H1 (cell line): ENCODE measurements at regions of chr5 and their contacts with region 1.

Region 1: DNA sequence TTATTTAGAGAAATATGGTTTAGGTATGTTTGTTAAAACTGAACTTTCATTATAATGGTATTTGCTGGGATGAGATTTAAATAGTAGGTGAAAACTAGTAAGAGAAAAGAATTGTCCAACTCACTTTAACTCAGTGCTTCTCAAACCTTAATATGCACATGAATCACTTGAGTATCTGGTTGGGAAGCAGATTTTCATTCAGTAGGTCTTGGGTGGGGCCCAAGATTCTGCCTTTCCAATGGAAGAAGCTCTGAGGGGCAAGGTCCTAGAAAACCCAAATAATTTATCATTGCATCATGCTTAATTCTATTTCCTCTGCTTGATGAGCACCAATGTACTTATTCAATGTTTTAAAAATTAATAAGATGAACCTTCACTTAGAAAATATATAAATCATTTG is 262.6 kb downstream of the KIAA0825 start:
- DNase-seq: no peak
- H3K4me3 ChIP-seq: peak overlapping the region in 1 of 4 experiments; percentile 44; a peak in 1 of 8 replicates
- H3K27ac ChIP-seq: no peak overlapping the region
- H3K4me1 ChIP-seq: peaks cover 2 to 39% (median 11%) of the 10 kb centered on the region in 4 experiments; a peak in 6 of 7 replicates
- H3K27me3 ChIP-seq: no peaks in the 10 kb centered on the region
- CTCF ChIP-seq: no peak
- EP300 ChIP-seq: no peak
- POLR2A ChIP-seq: no peak
- RAD21 ChIP-seq: no peak

Region 2: GRCh38 chr5:94345257-94345656 is 10.6 kb before region 1 on chr5:
- CTCF ChIA-PET with region 1: interaction called, 3 read pairs
- POLR2A ChIA-PET with region 1: interaction called, 93 read pairs
- DNase-seq: no peak
- H3K4me3 ChIP-seq: no peak overlapping the region
- H3K27ac ChIP-seq: no peak overlapping the region
- H3K4me1 ChIP-seq: no peaks in the 10 kb centered on the region
- H3K27me3 ChIP-seq: no peaks in the 10 kb centered on the region
- CTCF ChIP-seq: no peak
- EP300 ChIP-seq: no peak
- POLR2A ChIP-seq: peak in 1 of 2 experiments; percentile 46; a peak in 1 of 3 replicates
- RAD21 ChIP-seq: no peak

Region 3: DNA sequence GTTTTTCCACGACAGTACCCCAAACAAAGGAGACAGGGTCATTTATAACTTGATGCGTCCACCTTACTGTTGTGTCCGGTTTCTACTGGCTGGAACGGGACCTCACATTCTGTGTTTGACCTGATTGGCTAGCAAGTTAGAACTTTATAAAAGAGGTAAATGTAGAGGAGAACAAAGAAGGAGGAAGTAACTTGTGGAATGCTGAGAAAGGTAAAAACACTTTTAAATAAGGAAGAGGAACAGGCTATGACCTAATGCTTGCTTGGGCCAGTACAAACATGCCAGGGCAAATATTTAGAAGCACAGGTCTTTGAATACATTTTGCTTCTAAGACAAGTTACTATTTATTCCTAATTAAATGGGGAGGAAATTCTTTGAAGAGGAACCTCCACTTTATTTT is 11.0 kb after region 1 on chr5:
- CTCF ChIA-PET with region 1: interaction called, 4 read pairs
- POLR2A ChIA-PET with region 1: interaction called, 44 read pairs
- DNase-seq: no peak
- H3K4me3 ChIP-seq: no peak overlapping the region
- H3K27ac ChIP-seq: no peak overlapping the region
- H3K4me1 ChIP-seq: peaks cover 0 to 3% (median 1%) of the 10 kb centered on the region in 4 experiments; a peak in 2 of 7 replicates
- H3K27me3 ChIP-seq: no peaks in the 10 kb centered on the region
- CTCF ChIP-seq: no peak
- EP300 ChIP-seq: no peak
- POLR2A ChIP-seq: no peak
- RAD21 ChIP-seq: no peak

Region 4: GRCh38 chr5:94376672-94377345 is 21.0 kb after region 1 on chr5:
- CTCF ChIA-PET with region 1: no interaction called
- POLR2A ChIA-PET with region 1: interaction called, 12 read pairs
- DNase-seq: no peak
- H3K4me3 ChIP-seq: no peak overlapping the region
- H3K27ac ChIP-seq: no peak overlapping the region
- H3K4me1 ChIP-seq: peaks cover 0 to 4% (median 3%) of the 10 kb centered on the region in 4 experiments; a peak in 3 of 7 replicates
- H3K27me3 ChIP-seq: no peaks in the 10 kb centered on the region
- CTCF ChIP-seq: no peak
- EP300 ChIP-seq: no peak
- POLR2A ChIP-seq: no peak
- RAD21 ChIP-seq: no peak

Region 5: DNA sequence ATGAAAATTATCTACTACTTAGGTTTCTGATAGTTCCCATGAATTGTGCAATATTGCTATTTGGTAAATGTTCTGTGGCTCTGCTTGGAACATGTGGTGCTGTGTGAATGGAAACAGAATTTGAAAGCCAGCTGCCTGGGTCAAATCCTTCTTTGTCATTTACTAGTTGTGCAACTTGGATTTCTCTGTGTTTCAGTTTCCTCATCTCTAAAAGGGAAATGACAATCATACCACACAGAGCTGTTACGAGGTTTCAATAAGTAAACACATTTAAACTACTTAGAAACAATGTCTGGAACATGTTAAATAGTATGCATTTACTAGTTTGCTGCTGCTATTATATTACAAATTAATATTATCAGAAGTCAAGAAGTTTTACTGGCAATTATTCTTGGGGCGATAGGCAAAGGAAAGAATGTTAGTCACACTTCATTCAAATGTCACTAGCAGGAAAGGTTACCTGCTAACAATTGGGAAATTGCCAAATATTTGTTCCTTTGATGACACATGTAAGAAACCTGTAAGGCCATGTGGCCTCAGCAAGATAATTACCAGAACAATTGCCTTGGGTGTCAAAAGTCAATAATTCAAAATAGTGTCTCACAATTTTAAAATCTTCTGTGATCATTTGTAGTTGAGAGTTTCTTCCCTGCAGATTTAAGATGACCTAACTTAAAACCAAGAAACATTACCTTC is 77.8 kb after region 1 on chr5:
- CTCF ChIA-PET with region 1: no interaction called
- POLR2A ChIA-PET with region 1: no interaction called
- DNase-seq: no peak
- H3K4me3 ChIP-seq: no peak overlapping the region
- H3K27ac ChIP-seq: no peak overlapping the region
- H3K4me1 ChIP-seq: no peaks in the 10 kb centered on the region
- H3K27me3 ChIP-seq: no peaks in the 10 kb centered on the region
- CTCF ChIP-seq: no peak
- EP300 ChIP-seq: no peak
- POLR2A ChIP-seq: no peak
- RAD21 ChIP-seq: no peak